AG04449 (cell line): ENCODE measurements at regions of chr1 and their contacts with region 1.

Region 1: DNA sequence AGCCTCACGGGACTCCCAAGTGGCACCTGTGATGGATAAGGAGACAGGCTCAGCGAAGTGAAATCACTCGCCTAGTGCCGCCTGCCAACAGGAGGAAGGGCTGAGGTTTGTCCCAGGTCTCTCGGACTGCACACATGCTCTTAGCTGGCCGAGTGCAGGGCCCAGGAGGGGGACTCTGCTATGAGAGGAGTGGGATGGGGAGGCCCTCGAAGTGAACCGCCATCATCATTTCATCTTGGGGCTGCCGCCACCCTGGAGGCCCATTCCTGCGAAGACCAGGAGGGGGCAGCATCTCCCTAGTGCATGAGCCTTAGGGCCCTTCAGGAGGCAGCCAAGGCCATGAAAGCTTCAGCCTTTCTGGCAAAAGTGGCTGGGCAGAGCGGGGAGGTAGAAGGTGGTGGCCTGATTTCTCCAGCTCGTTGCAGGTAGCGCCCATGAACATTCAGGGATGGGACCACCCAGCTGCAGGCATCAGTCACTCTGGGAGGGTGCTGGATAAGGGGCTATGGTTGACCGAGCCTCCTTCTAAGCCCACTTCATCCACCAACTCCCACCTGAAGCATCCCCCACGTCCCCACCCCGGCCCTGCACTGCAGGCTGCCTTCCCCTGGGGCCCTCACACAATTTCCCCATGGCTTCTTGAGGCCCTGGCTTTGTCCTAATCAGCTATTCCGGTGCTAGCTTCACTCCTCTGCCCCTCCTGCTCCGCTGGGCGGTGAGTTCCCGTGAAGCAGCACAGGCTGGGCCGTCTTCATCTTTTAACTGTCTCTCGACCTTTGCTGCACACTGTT is 17.2 kb upstream of the RASSF5 start:
- DNase-seq: no peak
- H3K4me3 ChIP-seq: no peak overlapping the region
- CTCF ChIP-seq: peak; percentile 98

Region 2: DNA sequence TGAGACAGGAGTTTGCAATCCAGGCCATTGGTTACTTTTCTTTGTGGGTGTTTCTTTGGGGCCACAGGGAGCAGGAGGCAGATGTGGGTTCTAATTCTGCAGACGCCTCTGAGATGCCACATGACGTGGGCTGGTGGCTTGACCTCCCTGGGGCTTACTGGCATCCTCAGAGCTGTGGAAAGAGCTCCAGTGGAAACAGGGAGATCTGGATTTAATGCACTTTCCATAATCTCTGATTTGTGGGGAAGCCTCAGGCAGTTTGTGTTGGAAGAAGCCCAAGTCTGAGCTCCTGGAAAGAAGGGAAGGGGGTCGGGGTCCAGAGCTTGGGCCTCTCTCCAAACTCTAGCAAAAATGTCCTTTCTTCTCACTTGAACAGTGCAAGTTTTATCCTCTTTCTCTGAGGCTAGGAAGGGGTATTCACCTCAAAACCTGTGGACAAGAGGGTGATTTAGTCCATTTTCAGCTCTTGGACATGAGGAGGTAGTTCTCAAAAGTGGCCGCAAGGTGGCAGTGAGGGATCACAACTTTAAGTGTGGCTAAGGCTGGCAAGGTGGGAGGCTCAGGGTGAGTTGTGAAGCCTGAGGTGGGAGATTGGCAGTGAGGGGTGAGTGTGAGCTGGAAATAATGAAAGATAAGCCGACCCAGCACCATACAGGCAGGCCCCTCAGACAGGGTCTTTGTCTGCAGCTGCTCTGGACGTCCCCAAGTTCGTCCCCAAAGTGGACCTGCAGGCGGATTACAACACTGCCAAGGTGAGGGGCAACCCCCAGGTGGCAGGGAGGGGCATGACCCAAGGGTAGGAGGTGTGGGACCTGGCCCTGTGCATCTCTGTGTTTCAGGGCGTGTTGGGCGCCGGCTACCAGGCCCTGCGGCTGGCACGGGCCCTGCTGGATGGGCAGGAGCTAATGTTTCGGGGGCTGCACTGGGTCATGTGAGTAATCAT is 10.7 kb before region 1 on chr1:
- CTCF ChIA-PET with region 1: interaction called, 185 read pairs
- POLR2A ChIA-PET with region 1: no interaction called
- DNase-seq: no peak
- H3K4me3 ChIP-seq: no peak overlapping the region
- CTCF ChIP-seq: peak; percentile 70

Region 3: GRCh38 chr1:206551986-206552326 is 61.8 kb after region 1 on chr1:
- CTCF ChIA-PET with region 1: interaction called, 53 read pairs
- POLR2A ChIA-PET with region 1: no interaction called
- DNase-seq: no peak
- H3K4me3 ChIP-seq: no peak overlapping the region
- CTCF ChIP-seq: no peak

Region 4: DNA sequence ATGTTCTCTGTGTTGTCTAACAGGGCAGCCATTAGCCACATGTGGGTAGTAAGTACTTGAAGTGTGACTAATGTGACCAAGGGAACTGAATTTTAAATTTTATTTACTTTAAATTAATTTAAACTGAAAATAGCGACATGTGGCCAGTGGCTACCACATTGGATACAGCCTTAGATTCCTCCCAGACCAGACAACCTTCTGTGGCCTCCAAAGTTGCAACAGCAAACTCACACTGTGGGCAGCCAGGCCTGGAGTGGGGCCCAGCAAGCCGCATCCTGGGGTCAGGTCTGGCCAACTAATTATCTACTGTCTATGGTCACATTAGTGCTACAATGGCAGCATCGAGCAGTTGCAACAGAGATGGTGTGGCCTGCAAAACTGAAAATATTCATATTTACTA is 110.4 kb after region 1 on chr1:
- CTCF ChIA-PET with region 1: interaction called, 16 read pairs
- POLR2A ChIA-PET with region 1: no interaction called
- DNase-seq: no peak
- H3K4me3 ChIP-seq: no peak overlapping the region
- CTCF ChIP-seq: no peak

Region 5: GRCh38 chr1:206635080-206635977 is 145.2 kb after region 1 on chr1 and contains the start of gene DYRK3:
- CTCF ChIA-PET with region 1: interaction called, 32 read pairs
- POLR2A ChIA-PET with region 1: no interaction called
- DNase-seq: no peak
- H3K4me3 ChIP-seq: peak within 1 kb of the TSS; percentile 86
- CTCF ChIP-seq: no peak

Region 6: GRCh38 chr1:206725109-206725963 is 235.2 kb after region 1 on chr1:
- CTCF ChIA-PET with region 1: interaction called, 11 read pairs
- POLR2A ChIA-PET with region 1: no interaction called
- DNase-seq: no peak
- H3K4me3 ChIP-seq: no peak overlapping the region
- CTCF ChIP-seq: peak; percentile 74

Region 7: DNA sequence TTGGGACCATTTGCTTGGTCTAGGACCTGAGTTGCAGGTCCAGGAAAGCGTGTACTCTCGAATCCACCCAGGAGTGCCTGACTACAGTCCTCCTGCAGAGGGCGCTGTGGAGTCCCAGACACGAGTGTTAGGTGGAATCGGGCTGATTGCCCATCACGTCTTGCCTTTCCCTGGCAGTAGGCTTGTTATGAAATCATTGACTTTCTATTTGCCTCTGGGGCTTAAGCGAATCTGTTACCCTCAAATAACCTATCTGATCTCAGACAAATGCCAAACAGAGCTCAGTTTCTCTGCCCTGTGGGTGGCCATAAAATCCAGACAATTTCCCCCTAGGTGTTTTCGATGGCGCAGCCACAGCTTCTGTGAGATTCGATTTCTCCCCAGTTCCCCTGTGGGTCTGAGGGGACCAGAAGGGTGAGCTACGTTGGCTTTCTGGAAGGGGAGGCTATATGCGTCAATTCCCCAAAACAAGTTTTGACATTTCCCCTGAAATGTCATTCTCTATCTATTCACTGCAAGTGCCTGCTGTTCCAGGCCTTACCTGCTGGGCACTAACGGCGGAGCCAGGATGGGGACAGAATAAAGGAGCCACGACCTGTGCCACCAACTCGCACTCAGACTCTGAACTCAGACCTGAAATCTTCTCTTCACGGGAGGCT is 375.0 kb after region 1 on chr1 and contains the start of gene IL20:
- CTCF ChIA-PET with region 1: no interaction called
- POLR2A ChIA-PET with region 1: no interaction called
- DNase-seq: peak; percentile 40
- H3K4me3 ChIP-seq: no peak within 1 kb of the TSS
- CTCF ChIP-seq: peak; percentile 90

Region 8: DNA sequence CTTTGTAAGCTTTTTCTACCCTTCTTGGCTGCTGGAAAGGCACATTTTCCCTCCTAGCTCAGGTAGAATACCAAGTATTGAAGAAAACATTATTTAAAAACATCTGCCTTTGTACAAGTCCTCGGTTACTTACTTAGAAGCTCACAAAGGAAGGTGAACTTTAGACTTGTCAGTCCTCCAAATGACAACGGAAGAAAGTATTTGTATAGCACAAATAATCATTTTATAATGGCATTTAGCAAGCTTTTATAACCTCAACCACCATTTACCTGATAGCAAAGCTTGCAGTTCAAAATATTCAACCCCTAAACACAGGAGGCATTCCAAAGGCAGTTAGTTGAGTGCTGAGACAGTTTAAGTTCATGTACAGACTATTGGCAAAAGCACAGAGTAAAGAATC is 482.6 kb after region 1 on chr1:
- CTCF ChIA-PET with region 1: no interaction called
- POLR2A ChIA-PET with region 1: no interaction called
- DNase-seq: no peak
- H3K4me3 ChIP-seq: no peak overlapping the region
- CTCF ChIP-seq: no peak